H1 (cell line): ENCODE measurements at regions of chr1 and their contacts with region 1.

Region 1: GRCh38 chr1:33295450-33296081 is 25.3 kb downstream of the A3GALT2 start:
- DNase-seq: peak; percentile 59 to 97
- H3K4me3 ChIP-seq: no peak overlapping the region
- H3K27ac ChIP-seq: no peak overlapping the region
- H3K4me1 ChIP-seq: peaks cover 0 to 6% (median 0%) of the 10 kb centered on the region in 4 experiments; a peak in 3 of 7 replicates
- H3K27me3 ChIP-seq: no peaks in the 10 kb centered on the region
- CTCF ChIP-seq: peak; percentile 89 to 94 (median 90)
- EP300 ChIP-seq: no peak
- POLR2A ChIP-seq: no peak
- RAD21 ChIP-seq: peak; percentile 84 to 85

Region 2: GRCh38 chr1:33055210-33056008 is 240.2 kb before region 1 on chr1:
- CTCF ChIA-PET with region 1: no interaction called
- POLR2A ChIA-PET with region 1: no interaction called
- DNase-seq: peak; percentile 46 to 60
- H3K4me3 ChIP-seq: no peak overlapping the region
- H3K27ac ChIP-seq: no peak overlapping the region
- H3K4me1 ChIP-seq: no peaks in the 10 kb centered on the region
- H3K27me3 ChIP-seq: no peaks in the 10 kb centered on the region; a peak in 1 of 7 replicates
- CTCF ChIP-seq: peak; percentile 49 to 89 (median 83)
- EP300 ChIP-seq: no peak
- POLR2A ChIP-seq: no peak
- RAD21 ChIP-seq: peak; percentile 66 to 73

Region 3: GRCh38 chr1:33276573-33277288 is 18.8 kb before region 1 on chr1:
- CTCF ChIA-PET with region 1: interaction called, 49 read pairs
- POLR2A ChIA-PET with region 1: no interaction called
- DNase-seq: no peak
- H3K4me3 ChIP-seq: no peak overlapping the region
- H3K27ac ChIP-seq: no peak overlapping the region
- H3K4me1 ChIP-seq: peaks cover 0 to 9% (median 3%) of the 10 kb centered on the region in 4 experiments; a peak in 5 of 7 replicates
- H3K27me3 ChIP-seq: no peaks in the 10 kb centered on the region
- CTCF ChIP-seq: no peak
- EP300 ChIP-seq: no peak
- POLR2A ChIP-seq: no peak
- RAD21 ChIP-seq: no peak

Region 4: GRCh38 chr1:33312413-33312749 is 16.8 kb after region 1 on chr1:
- CTCF ChIA-PET with region 1: interaction called, 50 read pairs
- POLR2A ChIA-PET with region 1: no interaction called
- DNase-seq: no peak
- H3K4me3 ChIP-seq: no peak overlapping the region
- H3K27ac ChIP-seq: no peak overlapping the region
- H3K4me1 ChIP-seq: no peaks in the 10 kb centered on the region
- H3K27me3 ChIP-seq: peaks cover 0 to 3% (median 1%) of the 10 kb centered on the region in 4 experiments; a peak in 2 of 7 replicates
- CTCF ChIP-seq: no peak
- EP300 ChIP-seq: no peak
- POLR2A ChIP-seq: no peak
- RAD21 ChIP-seq: no peak

Region 5: DNA sequence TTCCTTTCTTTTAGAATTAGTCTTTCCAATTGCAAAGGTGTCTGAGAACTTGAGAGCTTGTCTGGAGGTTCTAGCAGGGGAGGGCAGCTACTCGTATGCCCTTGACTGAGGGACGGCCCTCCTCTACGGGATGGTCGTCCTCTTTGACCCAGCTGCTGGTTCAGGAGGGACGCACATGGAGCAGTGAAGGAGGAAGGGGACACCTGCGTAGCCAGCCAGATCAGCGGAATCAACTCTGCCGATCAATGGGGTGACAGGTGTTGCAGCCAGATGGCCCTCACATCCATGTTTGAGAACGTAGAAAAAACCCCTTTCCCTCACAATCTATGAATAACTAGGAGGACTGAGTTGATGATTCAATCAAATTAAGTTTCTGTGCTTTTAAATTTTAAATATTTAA is 41.0 kb after region 1 on chr1:
- CTCF ChIA-PET with region 1: interaction called, 37 read pairs
- POLR2A ChIA-PET with region 1: no interaction called
- DNase-seq: no peak
- H3K4me3 ChIP-seq: no peak overlapping the region
- H3K27ac ChIP-seq: no peak overlapping the region
- H3K4me1 ChIP-seq: peaks cover 17 to 37% (median 24%) of the 10 kb centered on the region in 4 experiments
- H3K27me3 ChIP-seq: no peaks in the 10 kb centered on the region; a peak in 1 of 7 replicates
- CTCF ChIP-seq: no peak
- EP300 ChIP-seq: no peak
- POLR2A ChIP-seq: no peak
- RAD21 ChIP-seq: no peak

Region 6: DNA sequence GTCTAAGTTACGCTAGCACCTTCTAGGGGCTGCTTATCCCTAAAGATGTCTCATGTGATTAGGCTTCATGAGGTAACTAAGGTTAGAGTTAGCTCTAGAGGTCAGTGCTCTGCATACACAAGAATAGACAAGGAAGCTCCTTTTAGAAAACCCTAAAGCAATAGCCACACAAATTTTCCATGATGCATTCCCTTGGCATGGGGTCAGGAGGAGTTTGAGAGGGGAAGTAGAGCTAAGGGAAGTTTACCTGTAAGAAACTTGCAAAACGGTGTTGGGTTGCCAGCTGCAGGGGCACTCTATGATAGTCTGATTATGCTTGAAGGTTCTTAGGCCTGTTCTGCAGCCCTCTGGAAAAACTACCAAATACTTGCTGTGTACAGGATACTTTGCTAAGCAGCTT is 64.4 kb after region 1 on chr1:
- CTCF ChIA-PET with region 1: interaction called, 180 read pairs
- POLR2A ChIA-PET with region 1: no interaction called
- DNase-seq: no peak
- H3K4me3 ChIP-seq: no peak overlapping the region
- H3K27ac ChIP-seq: no peak overlapping the region
- H3K4me1 ChIP-seq: peaks cover 13 to 31% (median 20%) of the 10 kb centered on the region in 4 experiments
- H3K27me3 ChIP-seq: peaks cover 0 to 13% (median 10%) of the 10 kb centered on the region in 4 experiments; a peak in 5 of 7 replicates
- CTCF ChIP-seq: no peak
- EP300 ChIP-seq: no peak
- POLR2A ChIP-seq: no peak
- RAD21 ChIP-seq: no peak

Region 7: DNA sequence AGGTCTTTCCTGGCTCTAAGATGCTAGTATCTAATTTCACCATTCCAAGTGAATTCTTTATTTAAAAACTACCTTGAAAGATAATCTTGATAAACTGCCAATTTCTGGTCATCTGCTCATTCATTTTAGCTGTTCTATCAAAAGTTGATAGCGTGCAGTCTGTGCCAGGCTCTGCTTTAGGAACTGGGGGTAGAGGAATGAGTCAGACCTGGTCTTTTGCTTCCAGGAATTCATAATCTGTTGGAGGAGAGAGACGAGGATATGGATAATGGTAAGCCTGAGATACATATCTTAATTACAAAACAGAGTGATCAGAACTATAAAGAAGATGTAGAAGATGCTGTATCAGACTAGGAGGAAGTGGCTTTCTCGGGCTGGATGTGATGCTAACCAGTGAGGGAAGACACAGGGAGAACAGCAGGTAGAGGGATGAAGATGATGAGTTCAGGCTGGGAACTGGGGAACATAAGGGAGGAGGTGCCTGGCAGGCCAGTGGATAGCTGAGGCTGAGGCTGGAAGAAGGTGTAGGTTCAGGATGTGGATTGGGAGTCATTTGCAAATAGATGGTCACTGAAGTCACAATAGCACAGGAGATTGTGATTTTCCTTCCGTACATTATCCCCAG is 147.6 kb after region 1 on chr1:
- CTCF ChIA-PET with region 1: interaction called, 10 read pairs
- POLR2A ChIA-PET with region 1: no interaction called
- DNase-seq: no peak
- H3K4me3 ChIP-seq: no peak overlapping the region
- H3K27ac ChIP-seq: no peak overlapping the region
- H3K4me1 ChIP-seq: peaks cover 0 to 4% (median 2%) of the 10 kb centered on the region in 4 experiments; a peak in 4 of 7 replicates
- H3K27me3 ChIP-seq: no peaks in the 10 kb centered on the region
- CTCF ChIP-seq: no peak
- EP300 ChIP-seq: no peak
- POLR2A ChIP-seq: no peak
- RAD21 ChIP-seq: no peak

Region 8: GRCh38 chr1:33472349-33472980 is 176.9 kb after region 1 on chr1 and contains the start of gene ZSCAN20:
- CTCF ChIA-PET with region 1: interaction called, 60 read pairs
- POLR2A ChIA-PET with region 1: no interaction called
- DNase-seq: peak; percentile 93 to 94
- H3K4me3 ChIP-seq: peak within 1 kb of the TSS; percentile 51 to 73 (median 65)
- H3K27ac ChIP-seq: no peak within 1 kb of the TSS
- H3K4me1 ChIP-seq: peaks cover 0 to 7% (median 2%) of the 10 kb centered on the region in 4 experiments; a peak in 3 of 7 replicates
- H3K27me3 ChIP-seq: no peaks in the 10 kb centered on the region
- CTCF ChIP-seq: 0 out of 4 replicates have a peak, but pooled peaks of 1 of the 3 experiments have one; percentile 2
- EP300 ChIP-seq: no peak
- POLR2A ChIP-seq: peak in 1 of 2 experiments; percentile 36; a peak in 1 of 3 replicates
- RAD21 ChIP-seq: no peak
- total RNA-seq, gene ZSCAN20: 3.4 and 3.7 TPM in 2 replicates

Region 9: DNA sequence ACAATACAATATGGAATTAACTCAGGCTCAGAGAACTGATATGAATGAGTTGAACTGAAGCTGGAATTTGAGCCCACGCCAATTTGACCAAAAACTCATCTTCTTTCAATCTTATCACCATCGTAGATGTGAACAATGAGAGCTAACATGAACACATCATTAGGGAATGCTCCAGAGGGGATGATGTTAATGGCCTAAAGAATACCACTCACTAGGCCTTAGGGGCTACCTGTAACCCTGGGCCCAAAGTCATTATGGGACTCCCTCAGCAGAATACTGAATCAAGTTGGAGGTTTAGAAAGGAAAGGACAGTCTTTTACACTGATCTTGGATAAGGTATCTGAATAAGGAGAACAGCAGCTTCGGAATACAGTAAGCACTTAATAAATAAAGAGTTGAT is 954.8 kb after region 1 on chr1:
- CTCF ChIA-PET with region 1: no interaction called
- POLR2A ChIA-PET with region 1: no interaction called
- DNase-seq: no peak
- H3K4me3 ChIP-seq: peak overlapping the region in 1 of 4 experiments; percentile 42; a peak in 1 of 8 replicates
- H3K27ac ChIP-seq: no peak overlapping the region
- H3K4me1 ChIP-seq: no peaks in the 10 kb centered on the region
- H3K27me3 ChIP-seq: no peaks in the 10 kb centered on the region
- CTCF ChIP-seq: no peak
- EP300 ChIP-seq: no peak
- POLR2A ChIP-seq: no peak
- RAD21 ChIP-seq: no peak